ENCODE measurements at regions of chrX and their contacts with region 1.

Region 1: GRCh38 chrX:2608638-2609430 is 82.3 kb upstream of the CD99 start:
- DNase-seq: peak; percentile 82
- H3K4me3 Mint-ChIP-seq: peak overlapping the region; percentile 90
- H3K27ac Mint-ChIP-seq: peak overlapping the region; percentile 82
- H3K4me1 Mint-ChIP-seq: peaks cover 45% of the 10 kb centered on the region
- H3K27me3 Mint-ChIP-seq: no peaks in the 10 kb centered on the region

Region 2: DNA sequence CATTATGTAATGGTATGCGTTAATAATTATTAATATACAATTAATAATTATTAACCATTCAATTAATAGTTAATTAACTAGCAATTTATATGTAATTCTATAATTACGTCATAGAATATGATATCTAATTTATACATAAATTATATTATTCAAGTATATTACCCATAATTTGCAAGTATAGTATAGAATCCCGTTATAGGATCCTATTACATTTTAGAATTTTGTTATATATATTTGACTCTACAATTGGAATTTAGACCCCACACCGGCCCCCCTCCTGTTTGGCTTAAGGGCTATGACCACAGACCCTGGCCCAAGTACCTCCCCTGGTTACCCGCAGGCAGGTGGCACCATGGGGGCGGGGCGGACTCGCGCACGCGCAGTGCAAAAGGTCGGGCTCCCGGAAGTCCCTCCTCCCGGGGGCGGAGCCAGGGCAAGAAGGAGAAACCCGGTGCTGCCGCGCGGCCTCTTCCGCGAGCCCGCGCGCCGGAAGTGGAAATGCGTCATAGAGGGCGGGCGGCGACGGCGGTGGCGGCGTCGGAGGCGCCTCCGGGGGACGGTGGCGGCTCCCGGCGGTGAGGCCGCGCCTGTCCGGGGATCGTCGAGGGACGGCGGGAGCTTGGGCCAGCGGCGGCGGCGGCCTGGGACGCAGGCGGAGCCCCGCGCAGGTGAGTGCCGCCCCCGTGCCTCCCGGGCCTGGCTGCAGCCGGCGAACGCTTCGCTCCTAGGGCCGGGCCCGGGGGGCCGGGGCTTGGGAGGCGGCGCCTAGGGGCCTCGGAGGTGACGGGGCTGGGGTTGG is 1017.5 kb before region 1 on chrX and contains the start of gene AKAP17A:
- CTCF ChIA-PET with region 1: no interaction called
- intact Hi-C with region 1: loop called (anchors 5 kb)
- DNase-seq: peak; percentile 98
- H3K4me3 Mint-ChIP-seq: peak within 1 kb of the TSS; percentile 91
- H3K27ac Mint-ChIP-seq: peak within 1 kb of the TSS; percentile 89
- H3K4me1 Mint-ChIP-seq: peaks cover 31% of the 10 kb centered on the region
- H3K27me3 Mint-ChIP-seq: no peaks in the 10 kb centered on the region
- total RNA-seq, gene AKAP17A: 59.2 to 60.5 TPM

Region 3: DNA sequence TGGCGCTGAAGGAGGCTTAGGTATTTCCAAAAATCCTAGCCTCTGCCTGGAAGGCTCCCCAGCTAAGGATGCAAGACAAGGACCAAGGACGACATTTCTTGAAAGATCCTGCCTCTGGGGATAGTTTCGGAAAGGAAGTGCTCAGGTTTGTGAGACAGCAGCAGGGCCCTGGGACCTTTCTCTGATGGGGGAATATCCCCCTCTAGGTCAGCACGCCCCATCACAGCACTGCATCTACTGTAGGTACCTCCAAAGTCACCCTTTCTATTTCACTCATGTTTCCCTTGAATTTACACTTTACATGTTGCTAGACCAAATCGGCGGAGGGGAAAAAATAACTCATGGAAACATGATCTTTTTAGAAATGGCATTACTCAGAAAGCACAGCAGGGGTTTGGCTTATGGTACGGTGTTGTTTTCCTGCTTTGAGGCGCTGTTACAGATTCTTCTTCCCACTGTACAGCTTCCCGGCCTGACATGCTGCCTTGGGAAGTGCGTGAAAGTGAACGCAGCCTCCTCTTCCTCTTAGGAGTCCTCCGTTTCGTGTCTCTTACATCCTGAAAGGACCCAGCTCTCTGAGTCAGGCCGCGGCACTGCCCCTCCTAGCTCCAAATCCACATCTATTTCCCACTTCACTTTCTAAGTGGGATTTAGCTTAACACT is 30.9 kb before region 1 on chrX:
- CTCF ChIA-PET with region 1: no interaction called
- intact Hi-C with region 1: no loop called
- DNase-seq: no peak
- H3K4me3 Mint-ChIP-seq: no peak overlapping the region
- H3K27ac Mint-ChIP-seq: no peak overlapping the region
- H3K4me1 Mint-ChIP-seq: peaks cover 5% of the 10 kb centered on the region
- H3K27me3 Mint-ChIP-seq: peaks cover 30% of the 10 kb centered on the region